ENCODE measurements at regions of chr13 and their contacts with region 1.

Region 1: DNA sequence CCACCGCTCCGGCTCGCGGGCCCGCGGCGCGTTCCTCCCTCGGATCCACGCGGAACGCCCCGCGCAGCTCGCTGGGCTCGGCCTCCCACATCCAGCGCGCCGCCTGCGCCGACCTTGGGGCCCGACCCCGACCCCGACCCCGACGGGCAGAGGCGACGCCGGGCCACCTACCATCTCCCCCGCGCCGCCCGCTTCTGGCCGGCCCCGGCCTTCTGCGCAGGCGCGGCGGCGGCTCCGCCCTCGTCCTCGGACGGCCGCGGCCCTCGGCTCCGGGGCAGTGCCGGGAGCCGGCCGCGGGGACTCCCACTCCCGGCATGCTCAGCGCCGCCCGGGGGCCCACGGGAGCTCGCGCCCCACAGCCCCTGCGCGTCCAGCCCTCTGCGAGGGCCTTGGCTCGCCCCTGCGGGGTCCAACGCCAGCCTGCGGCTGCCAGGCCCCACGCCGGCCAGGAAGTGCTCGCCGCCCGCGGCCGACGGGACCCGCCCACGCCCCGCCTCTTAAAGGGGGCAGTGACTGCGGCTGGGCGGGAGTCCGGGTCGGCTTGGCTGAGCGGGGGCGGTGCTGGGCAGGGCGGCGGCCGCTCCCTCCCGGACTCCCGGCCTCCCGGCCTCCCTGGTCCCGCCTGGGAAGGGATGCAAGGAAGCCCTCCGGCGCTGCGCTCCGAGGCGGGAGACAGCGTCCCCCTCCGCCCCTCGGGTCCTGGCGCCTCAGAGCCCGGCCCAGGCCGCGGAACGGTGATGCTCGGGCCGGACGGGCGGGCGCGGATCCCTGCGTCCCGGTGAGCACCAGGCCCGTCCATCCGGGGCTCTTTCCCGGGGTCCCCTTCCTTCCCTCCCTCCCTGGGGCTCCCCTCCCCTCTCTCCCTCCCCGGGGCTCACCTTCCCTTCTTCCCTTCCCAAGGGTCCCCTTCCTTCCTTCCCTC is at the start of gene DCUN1D2:
- H3K4me3 Mint-ChIP-seq: peak within 1 kb of the TSS; percentile 94
- H3K27ac Mint-ChIP-seq: peak within 1 kb of the TSS; percentile 91
- H3K4me1 Mint-ChIP-seq: peaks cover 67% of the 10 kb centered on the region
- H3K27me3 Mint-ChIP-seq: no peaks in the 10 kb centered on the region

Region 2: DNA sequence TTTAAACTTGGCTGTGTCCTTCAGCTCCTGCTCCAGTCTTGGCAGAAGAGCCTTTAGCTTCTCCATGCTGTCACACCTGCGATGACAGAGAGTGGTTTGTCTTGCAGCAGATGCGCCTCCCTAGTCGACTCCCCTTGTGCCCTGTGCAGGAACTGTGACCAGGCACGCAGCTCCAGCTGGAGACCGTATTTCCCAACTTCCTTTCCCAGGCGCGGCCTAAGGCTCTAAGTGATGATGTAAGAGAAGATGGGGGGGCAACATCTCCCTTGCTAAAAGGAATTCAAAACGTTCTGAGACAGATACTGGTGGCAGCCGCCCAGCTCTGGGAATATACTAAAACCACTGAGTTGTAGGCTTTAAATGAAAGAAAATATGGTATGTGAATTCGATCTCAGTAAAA is 16.6 kb before region 1 on chr13:
- intact Hi-C with region 1: loop called (anchors 2 kb)
- H3K4me3 Mint-ChIP-seq: no peak overlapping the region
- H3K27ac Mint-ChIP-seq: peak overlapping the region; percentile 45
- H3K4me1 Mint-ChIP-seq: peaks cover 38% of the 10 kb centered on the region
- H3K27me3 Mint-ChIP-seq: no peaks in the 10 kb centered on the region

Region 3: DNA sequence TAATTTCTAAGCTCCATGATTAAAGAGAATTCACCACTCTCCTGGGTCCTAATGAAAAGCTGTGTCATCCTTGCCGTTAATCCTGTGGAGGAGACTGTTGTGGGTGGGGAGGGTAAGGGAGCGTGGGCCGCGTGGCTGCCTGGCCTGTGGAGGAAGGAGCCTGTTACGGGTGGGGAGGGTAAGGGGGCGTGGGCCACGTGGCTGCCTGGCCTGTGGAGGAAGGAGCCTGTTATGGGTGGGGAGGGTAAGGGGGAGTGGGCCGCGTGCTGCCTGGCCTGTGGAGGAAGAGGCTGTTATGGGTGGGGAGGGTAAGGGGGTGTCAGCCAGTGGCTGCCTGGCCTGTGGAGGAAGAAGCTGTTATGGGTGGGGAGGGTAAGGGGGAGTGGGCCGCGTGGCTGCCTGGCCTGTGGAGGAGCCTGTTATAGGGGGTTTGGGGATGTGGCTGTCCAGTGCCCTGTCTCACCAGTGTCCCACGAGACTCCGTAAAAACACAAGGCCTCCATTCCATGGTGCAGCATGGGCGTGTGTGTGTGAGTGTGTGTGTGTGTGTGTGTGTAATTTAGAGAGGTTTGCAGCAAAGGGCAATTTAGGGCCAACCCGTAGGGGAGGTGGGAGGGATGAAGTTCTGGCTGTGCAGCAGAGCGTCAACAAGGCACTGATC is 15.4 kb after region 1 on chr13:
- intact Hi-C with region 1: loop called (anchors 2 kb)
- H3K4me3 Mint-ChIP-seq: peak overlapping the region; percentile 33
- H3K27ac Mint-ChIP-seq: peak overlapping the region; percentile 94
- H3K4me1 Mint-ChIP-seq: peaks cover 54% of the 10 kb centered on the region
- H3K27me3 Mint-ChIP-seq: no peaks in the 10 kb centered on the region

Region 4: GRCh38 chr13:113528101-113528812 is 37.5 kb after region 1 on chr13:
- intact Hi-C with region 1: no loop called
- H3K4me3 Mint-ChIP-seq: no peak overlapping the region
- H3K27ac Mint-ChIP-seq: peak overlapping the region; percentile 75
- H3K4me1 Mint-ChIP-seq: peaks cover 21% of the 10 kb centered on the region
- H3K27me3 Mint-ChIP-seq: no peaks in the 10 kb centered on the region

Region 5: GRCh38 chr13:113552786-113553432 is 62.2 kb after region 1 on chr13:
- intact Hi-C with region 1: loop called (anchors 10 kb)
- H3K4me3 Mint-ChIP-seq: no peak overlapping the region
- H3K27ac Mint-ChIP-seq: peak overlapping the region; percentile 72
- H3K4me1 Mint-ChIP-seq: peaks cover 40% of the 10 kb centered on the region
- H3K27me3 Mint-ChIP-seq: no peaks in the 10 kb centered on the region